Mammary epithelial cell (primary cell): ENCODE measurements at regions of chr2 and their contacts with region 1.

Region 1: GRCh38 chr2:96602330-96602823 is 35.7 kb downstream of the KANSL3 start:
- DNase-seq: peak; percentile 7
- H3K4me3 ChIP-seq: no peak overlapping the region
- H3K27ac ChIP-seq: no peak overlapping the region
- H3K4me1 ChIP-seq: peaks cover 5% of the 10 kb centered on the region
- H3K27me3 ChIP-seq: no peaks in the 10 kb centered on the region
- CTCF ChIP-seq: peak; percentile 26 to 50

Region 2: DNA sequence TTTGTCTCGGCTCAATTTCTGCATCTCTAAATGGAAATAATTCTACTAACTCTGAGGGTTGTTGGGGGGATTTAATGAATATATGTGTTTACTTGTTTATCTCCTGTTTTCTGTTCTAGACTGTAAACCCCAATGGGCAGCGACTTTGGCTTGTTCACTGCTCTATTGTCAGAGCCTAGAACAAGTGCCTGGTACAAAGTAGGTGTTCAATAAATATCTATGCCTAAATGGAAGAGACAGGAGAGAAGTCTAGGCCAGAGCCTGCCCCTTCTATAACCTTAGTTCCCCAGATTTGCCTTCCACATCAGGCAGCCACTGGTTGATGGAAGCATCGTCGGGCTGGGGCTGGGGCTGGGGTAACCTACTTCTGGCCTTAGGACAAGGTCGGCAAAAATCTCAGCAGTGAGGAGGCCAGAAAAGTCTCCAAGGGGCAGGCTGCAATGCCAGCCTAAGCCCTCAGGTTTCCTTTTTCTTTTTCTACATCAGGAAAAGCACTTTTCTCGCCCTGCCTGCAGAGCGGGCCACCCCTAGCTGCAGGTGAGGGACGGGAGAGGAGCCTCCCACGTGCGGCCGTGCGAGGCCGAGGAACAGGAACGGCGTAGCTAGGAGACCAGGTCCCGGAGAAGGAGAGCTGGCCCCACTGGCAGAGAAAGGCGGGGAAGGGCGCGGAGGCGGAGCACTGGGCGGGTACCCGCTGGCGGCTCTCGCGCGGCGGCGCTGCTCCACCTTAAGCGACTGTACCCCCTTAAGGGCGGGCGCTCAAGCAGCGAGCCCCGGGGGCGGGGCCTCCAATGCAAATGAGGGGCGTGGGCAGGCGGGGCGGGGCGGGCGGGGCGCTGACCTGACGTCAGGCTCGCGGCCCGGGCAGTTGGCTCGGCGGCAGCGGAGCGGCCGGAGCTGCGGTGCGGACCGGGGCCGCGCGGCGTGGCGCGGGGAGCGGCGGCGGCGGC is 157.9 kb after region 1 on chr2 and contains the start of gene CNNM4:
- CTCF ChIA-PET with region 1: no interaction called
- dilution Hi-C with region 1: no loop called
- in situ Hi-C with region 1: no loop called
- intact Hi-C with region 1: loop called (anchors 2 kb)
- DNase-seq: peak; percentile 90
- H3K4me3 ChIP-seq: peak within 1 kb of the TSS; percentile 46 to 86 (median 78)
- H3K27ac ChIP-seq: no peak within 1 kb of the TSS
- H3K4me1 ChIP-seq: peaks cover 51% of the 10 kb centered on the region
- H3K27me3 ChIP-seq: no peaks in the 10 kb centered on the region
- CTCF ChIP-seq: peak in 1 of 2 donors; percentile 24
- total RNA-seq, gene CNNM4: 8.1 to 8.2 TPM

Region 3: GRCh38 chr2:96801005-96801785 is 198.8 kb after region 1 on chr2:
- CTCF ChIA-PET with region 1: no interaction called
- dilution Hi-C with region 1: no loop called
- in situ Hi-C with region 1: no loop called
- intact Hi-C with region 1: loop called (anchors 5 kb)
- DNase-seq: peak; percentile 43
- H3K4me3 ChIP-seq: no peak overlapping the region
- H3K27ac ChIP-seq: no peak overlapping the region
- H3K4me1 ChIP-seq: no peaks in the 10 kb centered on the region
- H3K27me3 ChIP-seq: no peaks in the 10 kb centered on the region
- CTCF ChIP-seq: peak; percentile 83 to 92